Caco-2 (cell line): ENCODE measurements at regions of chr2 and their contacts with region 1.

Region 1: DNA sequence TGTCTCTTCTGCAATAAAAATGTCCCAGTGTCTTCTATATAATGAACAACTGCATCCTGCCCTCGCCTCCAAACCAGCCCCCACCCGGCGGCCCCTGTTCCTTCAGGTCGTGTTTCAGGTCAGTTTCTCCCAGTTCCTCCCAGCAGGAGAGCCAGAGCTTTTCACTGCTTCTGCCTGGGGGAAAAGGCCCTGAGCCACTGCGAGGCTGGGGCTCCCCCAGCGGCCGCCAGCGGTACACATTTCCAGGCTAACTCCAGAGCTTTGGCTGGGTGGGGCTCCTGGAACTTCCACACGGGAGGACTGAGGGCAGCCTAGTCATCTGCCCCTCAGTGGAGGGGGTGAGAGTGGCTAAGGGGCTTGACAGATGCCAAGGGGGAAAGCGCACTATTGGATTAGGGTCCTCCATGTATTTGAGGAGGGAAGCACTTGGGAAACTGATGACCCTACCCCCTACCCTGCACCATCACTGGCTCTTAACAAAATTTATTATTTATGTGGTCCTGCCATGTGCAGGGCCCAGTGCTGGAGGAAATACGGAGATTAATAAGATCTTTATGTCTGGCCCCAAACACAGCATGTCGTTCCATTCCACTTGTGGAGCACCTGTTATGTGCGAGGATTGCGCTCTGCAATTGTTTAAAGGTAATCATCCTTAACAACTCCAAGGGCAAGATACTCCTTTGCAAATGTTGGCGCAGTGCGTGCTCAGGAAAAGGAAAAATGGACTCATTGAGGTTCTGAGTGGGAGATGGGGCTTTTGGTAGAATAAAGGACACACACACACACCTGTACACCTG is 17.3 kb upstream of the CYS1 start:
- DNase-seq: peak; percentile 78 to 85
- H3K4me3 ChIP-seq: no peak overlapping the region
- H3K4me3 Mint-ChIP-seq: no peak overlapping the region
- H3K27ac Mint-ChIP-seq: no peak overlapping the region
- H3K4me1 ChIP-seq: no peaks in the 10 kb centered on the region
- H3K4me1 Mint-ChIP-seq: no peaks in the 10 kb centered on the region
- H3K27me3 ChIP-seq: no peaks in the 10 kb centered on the region
- H3K27me3 Mint-ChIP-seq: no peaks in the 10 kb centered on the region
- CTCF ChIP-seq: peak; percentile 88 to 98

Region 2: DNA sequence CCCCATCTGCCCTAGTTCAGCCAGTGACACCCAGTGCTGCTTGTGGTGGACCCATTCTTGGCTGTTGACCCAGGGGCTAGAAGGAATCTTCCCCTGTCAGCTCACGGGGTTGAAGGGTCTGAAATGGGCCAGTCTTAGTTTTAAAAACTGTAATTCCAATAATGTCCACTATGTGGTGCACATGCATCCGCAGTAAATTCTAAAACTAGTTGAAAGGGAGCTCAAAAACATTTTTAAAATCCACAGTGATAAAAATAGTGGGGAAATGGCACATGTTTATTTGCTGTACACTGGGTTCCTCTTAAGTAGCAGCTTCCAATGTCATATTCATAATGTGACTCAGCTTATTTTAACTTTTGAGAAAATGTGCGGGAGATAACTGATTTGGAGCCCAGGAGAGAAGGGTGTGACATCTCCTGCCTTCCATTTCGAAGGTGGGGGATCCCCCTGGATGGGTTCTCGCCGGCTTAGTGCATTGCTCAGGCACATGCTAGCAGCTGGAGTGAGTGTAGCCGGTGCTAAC is 113.3 kb before region 1 on chr2:
- CTCF ChIA-PET with region 1: interaction called, 15 read pairs
- POLR2A ChIA-PET with region 1: no interaction called
- intact Hi-C with region 1: no loop called
- DNase-seq: peak in 1 of 2 experiments; percentile 57
- H3K4me3 ChIP-seq: no peak overlapping the region
- H3K4me3 Mint-ChIP-seq: no peak overlapping the region
- H3K27ac Mint-ChIP-seq: no peak overlapping the region
- H3K4me1 ChIP-seq: no peaks in the 10 kb centered on the region
- H3K4me1 Mint-ChIP-seq: no peaks in the 10 kb centered on the region
- H3K27me3 ChIP-seq: no peaks in the 10 kb centered on the region
- H3K27me3 Mint-ChIP-seq: no peaks in the 10 kb centered on the region
- CTCF ChIP-seq: peak; percentile 57 to 72

Region 3: DNA sequence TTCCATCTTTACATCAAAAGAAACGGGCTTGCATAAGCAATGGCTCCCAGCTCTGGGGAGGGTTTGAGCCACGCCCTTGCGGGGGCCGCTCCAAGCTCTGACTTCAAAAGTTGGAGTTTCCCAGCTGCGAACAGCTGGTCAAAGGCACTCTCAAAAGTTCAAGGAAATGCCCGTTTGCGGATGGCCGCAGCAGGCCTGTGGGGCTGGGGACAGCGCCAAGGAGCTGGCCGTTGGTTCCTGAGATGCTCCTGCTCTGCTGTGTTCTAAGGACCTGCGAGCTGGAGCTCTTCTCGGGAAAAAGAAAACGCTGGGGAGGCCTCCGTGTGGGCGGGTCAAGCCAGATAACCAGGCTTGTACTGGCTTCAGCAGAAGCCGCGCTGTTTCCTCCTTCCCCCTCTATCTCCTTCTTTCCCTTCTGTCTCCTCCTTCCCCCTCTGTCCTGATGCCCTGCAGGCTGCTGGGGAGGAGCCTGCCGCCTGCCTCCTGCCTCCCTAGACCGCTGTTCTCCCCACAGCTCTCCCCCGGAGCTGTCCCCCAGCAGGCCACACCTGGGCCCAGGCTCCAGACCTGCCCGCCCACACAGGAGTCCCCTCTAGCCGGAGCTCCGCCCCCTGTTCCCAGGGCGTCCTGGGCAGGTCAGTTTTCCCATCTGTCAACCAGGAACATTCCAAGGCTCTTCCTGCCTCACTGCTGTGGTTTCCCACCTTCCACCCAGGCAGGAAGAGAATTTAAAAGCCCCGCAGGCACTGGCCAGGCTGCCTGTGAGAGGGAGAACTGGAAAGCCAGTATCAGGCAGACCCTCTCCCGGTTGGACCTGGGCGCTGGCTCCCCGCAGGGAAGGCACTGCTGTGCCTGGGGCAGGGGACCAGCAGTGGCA is 40.1 kb before region 1 on chr2:
- CTCF ChIA-PET with region 1: interaction called, 25 read pairs
- POLR2A ChIA-PET with region 1: interaction called, 6 read pairs
- intact Hi-C with region 1: no loop called
- DNase-seq: peak; percentile 90 to 95
- H3K4me3 ChIP-seq: peak overlapping the region; percentile 37
- H3K4me3 Mint-ChIP-seq: peak overlapping the region; percentile 71
- H3K27ac Mint-ChIP-seq: peak overlapping the region; percentile 71
- H3K4me1 ChIP-seq: peaks cover 13% of the 10 kb centered on the region
- H3K4me1 Mint-ChIP-seq: peaks cover 14% of the 10 kb centered on the region
- H3K27me3 ChIP-seq: no peaks in the 10 kb centered on the region
- H3K27me3 Mint-ChIP-seq: no peaks in the 10 kb centered on the region
- CTCF ChIP-seq: no peak

Region 4: GRCh38 chr2:10079234-10079869 is 18.2 kb before region 1 on chr2:
- CTCF ChIA-PET with region 1: interaction called, 210 read pairs
- POLR2A ChIA-PET with region 1: no interaction called
- intact Hi-C with region 1: loop called (anchors 1 kb)
- DNase-seq: peak in 1 of 2 experiments; percentile 47
- H3K4me3 ChIP-seq: peak overlapping the region; percentile 55
- H3K4me3 Mint-ChIP-seq: peak overlapping the region; percentile 67
- H3K27ac Mint-ChIP-seq: no peak overlapping the region
- H3K4me1 ChIP-seq: peaks cover 11% of the 10 kb centered on the region; the same call in 1 of the 2 replicates
- H3K4me1 Mint-ChIP-seq: peaks cover 4% of the 10 kb centered on the region
- H3K27me3 ChIP-seq: no peaks in the 10 kb centered on the region
- H3K27me3 Mint-ChIP-seq: peaks cover 22% of the 10 kb centered on the region
- CTCF ChIP-seq: no peak

Region 5: DNA sequence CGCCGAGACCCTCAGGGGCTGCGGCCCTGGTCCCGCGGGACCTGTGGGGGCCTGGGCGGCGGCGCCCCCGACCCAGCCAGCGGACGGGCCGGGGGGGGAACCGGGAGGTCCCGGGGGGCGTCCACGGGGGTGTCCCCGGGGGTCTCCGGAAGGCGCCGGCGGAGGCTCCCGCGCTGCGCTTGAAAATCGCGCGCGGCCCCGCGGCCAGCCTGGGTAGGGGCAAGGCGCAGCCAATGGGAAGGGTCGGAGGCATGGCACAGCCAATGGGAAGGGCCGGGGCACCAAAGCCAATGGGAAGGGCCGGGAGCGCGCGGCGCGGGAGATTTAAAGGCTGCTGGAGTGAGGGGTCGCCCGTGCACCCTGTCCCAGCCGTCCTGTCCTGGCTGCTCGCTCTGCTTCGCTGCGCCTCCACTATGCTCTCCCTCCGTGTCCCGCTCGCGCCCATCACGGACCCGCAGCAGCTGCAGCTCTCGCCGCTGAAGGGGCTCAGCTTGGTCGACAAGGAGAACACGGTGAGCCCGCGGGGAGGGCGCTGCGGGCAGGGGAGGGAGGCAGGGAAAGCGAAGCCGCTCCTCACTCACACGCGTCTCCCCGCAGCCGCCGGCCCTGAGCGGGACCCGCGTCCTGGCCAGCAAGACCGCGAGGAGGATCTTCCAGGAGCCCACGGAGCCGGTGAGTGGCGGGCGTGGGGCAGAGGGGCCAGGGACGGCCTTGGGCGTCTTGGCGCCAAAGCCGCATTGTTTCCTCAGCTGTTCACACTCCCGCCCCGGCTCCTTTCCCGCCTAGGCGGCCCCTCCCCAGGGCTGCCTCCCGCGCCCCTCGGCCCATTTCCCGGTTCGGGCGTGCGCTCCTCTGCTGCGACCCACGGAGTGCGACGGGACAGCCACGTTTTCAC is 25.1 kb after region 1 on chr2 and contains the start of gene RRM2:
- CTCF ChIA-PET with region 1: interaction called, 4 read pairs
- POLR2A ChIA-PET with region 1: interaction called, 3 read pairs
- intact Hi-C with region 1: loop called (anchors 2 kb)
- DNase-seq: peak; percentile 98
- H3K4me3 ChIP-seq: peak within 1 kb of the TSS; percentile 66
- H3K4me3 Mint-ChIP-seq: peak within 1 kb of the TSS; percentile 96
- H3K27ac Mint-ChIP-seq: peak within 1 kb of the TSS; percentile 96
- H3K4me1 ChIP-seq: peaks cover 11% of the 10 kb centered on the region
- H3K4me1 Mint-ChIP-seq: peaks cover 13% of the 10 kb centered on the region
- H3K27me3 ChIP-seq: no peaks in the 10 kb centered on the region
- H3K27me3 Mint-ChIP-seq: no peaks in the 10 kb centered on the region
- CTCF ChIP-seq: no peak
- total RNA-seq, gene RRM2: 160 and 169 TPM in 2 replicates

Region 6: DNA sequence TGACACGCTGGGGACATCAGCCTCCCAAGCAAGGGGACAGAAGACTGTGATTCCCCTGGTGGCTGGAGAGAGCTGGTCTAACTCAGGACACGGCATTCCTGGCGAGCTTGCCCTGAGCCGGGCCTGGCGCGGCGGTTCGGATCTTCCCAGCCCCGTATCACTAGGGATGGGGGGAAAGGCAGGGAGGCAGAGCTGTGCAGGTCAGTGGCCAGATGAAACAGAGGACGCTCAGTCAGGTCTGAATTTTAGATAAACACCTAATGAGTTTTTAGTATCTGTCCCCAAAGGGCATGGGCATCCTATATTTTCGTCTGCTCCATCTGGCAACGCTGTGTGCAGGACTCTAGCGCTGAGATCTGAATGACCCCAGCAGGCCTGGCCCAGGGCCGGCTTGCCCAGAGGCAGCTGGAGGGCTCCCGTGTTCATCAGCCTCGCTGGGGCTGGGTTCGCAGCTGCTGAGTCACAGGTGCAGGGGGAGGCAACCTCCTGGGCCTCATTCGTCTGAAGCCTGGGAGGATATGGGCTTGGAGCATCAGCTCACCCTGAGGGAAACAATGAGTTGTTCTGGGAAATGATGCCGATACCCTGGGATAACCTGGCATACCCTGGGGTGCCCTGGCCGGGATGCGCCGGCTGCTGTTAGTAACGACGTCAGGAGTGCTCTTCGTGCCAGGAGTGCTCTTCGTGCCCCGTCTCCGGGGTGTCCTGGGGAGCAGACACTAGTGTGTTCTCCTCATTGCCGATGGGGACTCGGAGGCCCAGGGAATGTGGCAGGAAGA is 157.0 kb after region 1 on chr2:
- CTCF ChIA-PET with region 1: no interaction called
- POLR2A ChIA-PET with region 1: no interaction called
- intact Hi-C with region 1: no loop called
- DNase-seq: peak in 1 of 2 experiments; percentile 48
- H3K4me3 ChIP-seq: no peak overlapping the region
- H3K4me3 Mint-ChIP-seq: no peak overlapping the region
- H3K27ac Mint-ChIP-seq: no peak overlapping the region
- H3K4me1 ChIP-seq: no peaks in the 10 kb centered on the region
- H3K4me1 Mint-ChIP-seq: no peaks in the 10 kb centered on the region
- H3K27me3 ChIP-seq: no peaks in the 10 kb centered on the region
- H3K27me3 Mint-ChIP-seq: no peaks in the 10 kb centered on the region
- CTCF ChIP-seq: no peak